ENCODE measurements at regions of chr13 and their contacts with region 1.

Region 1: GRCh38 chr13:30132623-30133553 is 174.5 kb downstream of the KATNAL1 start:
- DNase-seq: peak; percentile 98
- ATAC-seq: peak; percentile 100
- H3K4me3 Mint-ChIP-seq: no peak overlapping the region
- H3K27ac Mint-ChIP-seq: peak overlapping the region; percentile 45
- H3K4me1 Mint-ChIP-seq: peaks cover 11% of the 10 kb centered on the region
- H3K27me3 Mint-ChIP-seq: peaks cover 3% of the 10 kb centered on the region

Region 2: DNA sequence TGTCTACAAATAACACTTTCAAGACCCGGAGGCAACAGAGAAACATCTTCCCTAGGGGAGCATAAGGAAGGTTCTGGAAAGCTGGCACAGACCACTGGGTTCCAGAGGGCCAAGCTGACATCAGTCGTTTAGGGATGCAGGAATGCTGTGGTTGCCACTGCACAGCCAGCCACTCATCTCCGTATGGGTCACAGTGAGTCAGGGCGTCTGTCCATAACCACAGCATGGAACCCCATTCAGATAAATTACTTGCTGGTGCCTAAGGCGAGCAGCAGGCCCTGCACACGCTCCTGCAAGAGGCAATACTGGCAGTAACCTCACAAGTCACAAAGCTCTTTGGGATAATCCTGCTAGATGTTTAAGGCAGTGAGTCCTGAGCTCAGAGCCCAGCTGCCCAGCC is 141.5 kb before region 1 on chr13:
- CTCF ChIA-PET with region 1: no interaction called
- POLR2A ChIA-PET with region 1: no interaction called
- DNase-seq: peak; percentile 9
- ATAC-seq: no peak
- H3K4me3 Mint-ChIP-seq: no peak overlapping the region
- H3K27ac Mint-ChIP-seq: no peak overlapping the region
- H3K4me1 Mint-ChIP-seq: no peaks in the 10 kb centered on the region
- H3K27me3 Mint-ChIP-seq: peaks cover 3% of the 10 kb centered on the region

Region 3: GRCh38 chr13:30091691-30092090 is 41.2 kb before region 1 on chr13:
- CTCF ChIA-PET with region 1: no interaction called
- POLR2A ChIA-PET with region 1: no interaction called
- DNase-seq: no peak
- ATAC-seq: no peak
- H3K4me3 Mint-ChIP-seq: no peak overlapping the region
- H3K27ac Mint-ChIP-seq: no peak overlapping the region
- H3K4me1 Mint-ChIP-seq: peaks cover 2% of the 10 kb centered on the region
- H3K27me3 Mint-ChIP-seq: no peaks in the 10 kb centered on the region

Region 4: GRCh38 chr13:30114571-30115256 is 18.2 kb before region 1 on chr13:
- CTCF ChIA-PET with region 1: interaction called, 71 read pairs
- POLR2A ChIA-PET with region 1: interaction called, 3 read pairs
- DNase-seq: peak; percentile 94
- ATAC-seq: peak; percentile 96
- H3K4me3 Mint-ChIP-seq: peak overlapping the region; percentile 78
- H3K27ac Mint-ChIP-seq: peak overlapping the region; percentile 9
- H3K4me1 Mint-ChIP-seq: peaks cover 38% of the 10 kb centered on the region
- H3K27me3 Mint-ChIP-seq: peaks cover 8% of the 10 kb centered on the region

Region 5: DNA sequence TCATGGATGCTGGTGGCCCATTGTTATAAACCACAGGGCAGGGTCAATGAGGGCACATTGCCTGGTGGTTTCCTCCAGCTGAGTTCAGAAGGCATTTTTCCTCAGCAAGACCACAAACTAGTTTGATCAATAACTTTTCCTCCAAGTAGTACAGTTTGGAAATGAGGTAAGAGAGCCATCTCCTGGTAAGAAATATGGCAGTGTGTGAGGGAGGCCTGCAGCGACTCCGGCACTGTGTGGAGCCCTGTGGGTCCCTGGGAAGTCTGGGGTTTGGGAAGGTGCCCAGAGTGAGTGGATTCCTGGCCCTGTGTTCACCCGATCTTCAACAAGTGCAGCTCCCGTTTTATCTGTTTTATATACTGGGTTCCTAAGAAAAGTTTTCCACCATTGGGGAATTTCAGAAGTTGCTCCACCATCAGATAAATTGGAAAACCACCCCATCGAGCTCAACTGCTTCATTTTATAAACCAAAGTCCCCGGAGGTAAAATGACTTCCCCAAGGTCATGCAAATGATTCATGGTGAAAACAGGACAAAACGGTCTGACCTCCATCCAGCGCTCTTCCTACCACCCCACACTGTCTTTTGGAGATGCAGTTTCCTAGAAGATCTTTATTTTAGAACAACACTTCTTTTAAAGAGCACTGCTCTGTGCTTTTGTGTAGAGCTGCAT is 26.0 kb after region 1 on chr13:
- CTCF ChIA-PET with region 1: interaction called, 104 read pairs
- POLR2A ChIA-PET with region 1: interaction called, 5 read pairs
- DNase-seq: no peak
- ATAC-seq: peak; percentile 58
- H3K4me3 Mint-ChIP-seq: no peak overlapping the region
- H3K27ac Mint-ChIP-seq: no peak overlapping the region
- H3K4me1 Mint-ChIP-seq: peaks cover 21% of the 10 kb centered on the region
- H3K27me3 Mint-ChIP-seq: peaks cover 3% of the 10 kb centered on the region

Region 6: GRCh38 chr13:30319130-30319529 is 186.2 kb after region 1 on chr13:
- CTCF ChIA-PET with region 1: interaction called, 11 read pairs
- POLR2A ChIA-PET with region 1: no interaction called
- DNase-seq: no peak
- ATAC-seq: no peak
- H3K4me3 Mint-ChIP-seq: no peak overlapping the region
- H3K27ac Mint-ChIP-seq: no peak overlapping the region
- H3K4me1 Mint-ChIP-seq: no peaks in the 10 kb centered on the region
- H3K27me3 Mint-ChIP-seq: peaks cover 4% of the 10 kb centered on the region

Region 7: GRCh38 chr13:30366088-30366487 is 233.2 kb after region 1 on chr13:
- CTCF ChIA-PET with region 1: interaction called, 11 read pairs
- POLR2A ChIA-PET with region 1: no interaction called
- DNase-seq: no peak
- ATAC-seq: no peak
- H3K4me3 Mint-ChIP-seq: no peak overlapping the region
- H3K27ac Mint-ChIP-seq: no peak overlapping the region
- H3K4me1 Mint-ChIP-seq: peaks cover 34% of the 10 kb centered on the region
- H3K27me3 Mint-ChIP-seq: no peaks in the 10 kb centered on the region

Region 8: DNA sequence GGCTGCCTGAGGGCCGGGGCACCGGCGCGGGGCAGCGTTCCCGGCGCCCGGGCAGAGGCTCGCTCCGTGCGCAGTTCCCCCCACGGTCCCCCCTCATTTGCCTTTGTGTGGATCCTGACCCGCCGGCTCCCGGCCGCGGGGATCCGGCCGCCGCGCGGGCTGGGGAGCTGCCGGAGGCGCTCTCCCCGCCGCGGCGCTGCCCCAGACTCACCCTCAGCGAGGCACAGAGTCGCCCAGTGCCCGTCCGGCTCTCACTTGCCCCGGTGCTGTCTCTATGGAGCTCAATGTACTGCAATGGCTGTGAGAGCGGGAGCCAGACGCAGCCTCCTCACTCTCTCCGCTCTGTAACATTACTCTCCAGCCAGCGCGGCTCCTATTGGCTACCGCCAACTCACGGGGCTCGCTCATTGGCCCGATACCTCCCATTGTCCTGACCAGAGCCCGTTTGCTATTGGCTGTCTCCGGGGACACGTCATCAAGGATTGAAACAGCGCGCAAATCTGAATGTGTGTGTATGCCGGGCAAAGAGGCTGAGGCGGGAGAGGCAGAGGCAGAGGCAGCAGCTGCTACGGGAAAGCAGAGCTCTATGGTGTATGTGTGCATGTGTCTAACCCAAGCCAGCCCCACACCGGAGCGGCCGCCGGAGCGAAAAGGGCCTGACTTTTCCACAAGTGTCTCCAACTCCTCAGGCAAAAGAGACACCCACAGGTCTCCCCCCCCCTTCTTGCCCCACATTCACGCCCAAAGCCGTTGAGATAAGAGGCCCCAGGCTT is 332.9 kb after region 1 on chr13 and contains the start of gene HMGB1:
- CTCF ChIA-PET with region 1: interaction called, 14 read pairs
- POLR2A ChIA-PET with region 1: interaction called, 5 read pairs
- DNase-seq: peak; percentile 99
- ATAC-seq: peak; percentile 95
- H3K4me3 Mint-ChIP-seq: peak within 1 kb of the TSS; percentile 88
- H3K27ac Mint-ChIP-seq: peak within 1 kb of the TSS; percentile 98
- H3K4me1 Mint-ChIP-seq: peaks cover 28% of the 10 kb centered on the region
- H3K27me3 Mint-ChIP-seq: no peaks in the 10 kb centered on the region
- total RNA-seq, gene HMGB1: 650 to 662 TPM

Region 9: DNA sequence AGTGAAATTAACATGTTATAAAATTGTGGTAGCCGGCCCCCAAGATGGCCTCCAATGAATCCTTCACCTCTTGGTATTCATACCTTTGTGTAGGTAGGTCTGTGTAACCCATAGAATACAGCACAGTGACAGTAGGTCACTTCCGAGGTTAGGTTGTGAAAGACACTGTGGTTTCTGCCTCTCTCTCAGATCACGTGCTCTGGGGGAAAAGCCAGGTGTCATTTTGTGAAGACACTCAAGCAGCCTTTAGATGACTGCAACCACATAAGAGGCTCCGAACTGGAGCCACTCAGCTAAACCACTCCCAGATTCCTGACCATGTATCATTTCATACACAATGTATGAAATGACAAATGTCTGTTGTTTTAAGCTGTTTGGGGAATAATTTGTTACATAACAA is 475.0 kb after region 1 on chr13:
- CTCF ChIA-PET with region 1: interaction called, 10 read pairs
- POLR2A ChIA-PET with region 1: no interaction called
- DNase-seq: peak; percentile 82
- ATAC-seq: peak; percentile 97
- H3K4me3 Mint-ChIP-seq: no peak overlapping the region
- H3K27ac Mint-ChIP-seq: no peak overlapping the region
- H3K4me1 Mint-ChIP-seq: peaks cover 25% of the 10 kb centered on the region
- H3K27me3 Mint-ChIP-seq: peaks cover 11% of the 10 kb centered on the region

Measured in activated CD8-positive, alpha-beta T cell treated with anti-CD3 and anti-CD28 coated beads, Interleukin-2, amount 10 ng/mL, durations not matched to agents 7 days and 5 days (primary cell).